Calu3 (cell line): ENCODE measurements at regions of chr1 and their contacts with region 1.

Region 1: GRCh38 chr1:108691942-108692723 is at the start of gene PRPF38B:
- DNase-seq: peak; percentile 87
- H3K4me3 Mint-ChIP-seq: peak within 1 kb of the TSS; percentile 92
- H3K27ac Mint-ChIP-seq: peak within 1 kb of the TSS; percentile 76
- H3K4me1 Mint-ChIP-seq: peaks cover 16% of the 10 kb centered on the region
- H3K27me3 Mint-ChIP-seq: no peaks in the 10 kb centered on the region
- CTCF ChIP-seq: no peak
- total RNA-seq, gene PRPF38B: 45.7 and 47.6 TPM in 2 replicates

Region 2: GRCh38 chr1:108624055-108624454 is 68.1 kb before region 1 on chr1:
- CTCF ChIA-PET with region 1: no interaction called
- intact Hi-C with region 1: no loop called
- DNase-seq: no peak
- H3K4me3 Mint-ChIP-seq: no peak overlapping the region
- H3K27ac Mint-ChIP-seq: no peak overlapping the region
- H3K4me1 Mint-ChIP-seq: peaks cover 24% of the 10 kb centered on the region
- H3K27me3 Mint-ChIP-seq: no peaks in the 10 kb centered on the region
- CTCF ChIP-seq: no peak

Region 3: DNA sequence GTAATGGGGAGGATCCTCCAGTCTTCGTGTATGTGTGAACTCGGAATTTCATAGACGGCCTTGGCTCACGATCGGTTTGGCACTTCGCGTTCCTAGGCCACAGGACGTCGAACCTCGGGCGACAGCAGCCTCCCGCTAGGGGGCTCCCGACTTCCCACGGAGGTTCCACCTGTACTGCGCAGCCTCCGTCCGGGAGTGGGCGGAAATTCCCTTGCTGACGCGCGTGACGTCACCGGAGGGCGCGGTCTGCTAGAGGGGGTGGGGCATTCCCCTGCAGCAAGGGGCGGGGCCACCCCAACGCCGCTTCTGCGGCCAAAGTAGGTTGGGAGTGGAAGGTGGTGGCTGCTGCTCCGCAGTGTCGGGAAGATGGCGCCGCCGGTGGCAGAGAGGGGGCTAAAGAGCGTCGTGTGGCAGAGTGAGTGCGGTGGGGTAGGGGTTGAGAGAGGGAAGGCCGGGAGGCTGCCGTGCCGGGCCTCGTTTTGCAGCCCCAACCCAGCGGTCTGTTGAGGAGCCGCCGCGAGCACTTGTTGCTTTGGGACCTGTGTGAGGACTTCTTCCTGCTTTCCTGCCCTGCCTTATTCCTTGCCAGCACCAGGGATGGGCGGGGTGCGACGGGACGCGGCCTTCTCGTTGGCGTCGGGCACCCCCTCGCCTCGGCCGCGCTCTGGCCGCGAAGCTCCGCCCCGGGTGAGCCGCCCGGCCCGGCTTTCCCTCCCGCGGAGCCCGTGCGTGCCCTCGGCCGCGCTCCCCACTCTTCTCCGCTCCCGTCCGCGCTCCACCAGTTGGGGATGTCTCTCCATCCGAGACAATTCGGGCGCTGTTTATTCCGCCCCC is 54.5 kb after region 1 on chr1 and contains the start of gene STXBP3:
- CTCF ChIA-PET with region 1: no interaction called
- intact Hi-C with region 1: loop called (anchors 2 kb)
- DNase-seq: peak; percentile 98
- H3K4me3 Mint-ChIP-seq: peak within 1 kb of the TSS; percentile 85
- H3K27ac Mint-ChIP-seq: peak within 1 kb of the TSS; percentile 97
- H3K4me1 Mint-ChIP-seq: peaks cover 19% of the 10 kb centered on the region
- H3K27me3 Mint-ChIP-seq: no peaks in the 10 kb centered on the region
- CTCF ChIP-seq: peak; percentile 75
- total RNA-seq, gene STXBP3: 30.3 and 32.0 TPM in 2 replicates